Head of caudate nucleus (tissue), 42 donors: ENCODE measurements at regions of chr9 and their contacts with region 1.

Region 1: GRCh38 chr9:96236854-96237550 is 65.0 kb downstream of the HSD17B3 start:
- DNase-seq: peak in 7 of 42 donors; percentile 11 to 56 (median 30)

Region 2: GRCh38 chr9:96317335-96317980 is 80.5 kb after region 1 on chr9:
- intact Hi-C with region 1: loop called (anchors 5 kb)
- DNase-seq: peak in 39 of 42 donors; percentile 12 to 86 (median 63)